Activated CD8-positive, alpha-beta T cell treated with anti-CD3 and anti-CD28 coated beads for 36 hours (primary cell): ENCODE measurements at regions of chr7 and their contacts with region 1.

Region 1: DNA sequence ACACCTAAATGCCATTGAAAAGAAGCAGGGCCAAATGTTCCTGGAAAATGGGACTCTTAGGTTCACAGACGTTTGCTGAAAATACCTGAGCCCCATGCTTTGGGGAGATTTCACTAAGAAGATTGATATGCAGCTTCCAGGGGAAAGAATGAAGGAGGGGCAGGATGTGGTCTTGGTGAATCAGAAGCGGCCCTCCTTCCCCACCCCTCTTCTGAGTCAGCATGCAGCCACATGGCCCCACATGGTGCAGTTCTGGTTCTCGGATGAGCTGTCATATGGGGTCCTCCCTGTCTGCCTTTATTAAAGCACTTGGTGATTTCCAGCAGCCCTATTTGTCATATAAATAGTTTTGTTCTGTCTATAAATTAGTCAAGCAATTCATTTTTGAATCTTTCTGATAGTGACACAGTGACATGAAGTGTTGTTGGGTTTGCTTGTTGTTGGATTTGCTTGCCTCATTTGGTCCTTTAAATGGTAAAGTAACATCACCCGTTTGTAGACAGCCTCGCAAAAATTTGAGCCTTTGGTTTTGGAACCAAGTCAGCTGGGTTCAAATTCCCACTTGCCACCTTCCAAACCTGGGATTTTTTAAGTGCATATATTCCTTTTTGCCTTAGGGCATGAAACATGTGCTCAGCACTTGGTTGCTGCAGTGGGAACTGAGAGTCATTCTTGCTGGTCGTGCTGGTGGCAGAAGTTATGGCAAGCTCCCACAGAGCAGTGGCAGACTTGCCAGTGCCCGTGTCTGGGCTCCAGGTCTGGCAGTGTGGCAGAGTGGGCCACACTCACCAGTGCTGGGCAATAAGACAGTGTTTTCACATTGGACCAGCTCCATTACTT is 68.1 kb upstream of the CDK6 start:
- DNase-seq: peak; percentile 96
- ATAC-seq: peak; percentile 98
- H3K4me3 Mint-ChIP-seq: peak overlapping the region; percentile 11
- H3K27ac Mint-ChIP-seq: peak overlapping the region; percentile 87
- H3K4me1 Mint-ChIP-seq: peaks cover 25% of the 10 kb centered on the region
- H3K27me3 Mint-ChIP-seq: peaks cover 1% of the 10 kb centered on the region
- CTCF ChIP-seq: no peak

Region 2: GRCh38 chr7:92200791-92201190 is 703.7 kb before region 1 on chr7:
- CTCF ChIA-PET with region 1: no interaction called
- POLR2A ChIA-PET with region 1: no interaction called
- intact Hi-C with region 1: no loop called
- DNase-seq: no peak
- ATAC-seq: no peak
- H3K4me3 Mint-ChIP-seq: no peak overlapping the region
- H3K27ac Mint-ChIP-seq: no peak overlapping the region
- H3K4me1 Mint-ChIP-seq: no peaks in the 10 kb centered on the region
- H3K27me3 Mint-ChIP-seq: no peaks in the 10 kb centered on the region
- CTCF ChIP-seq: no peak

Region 3: DNA sequence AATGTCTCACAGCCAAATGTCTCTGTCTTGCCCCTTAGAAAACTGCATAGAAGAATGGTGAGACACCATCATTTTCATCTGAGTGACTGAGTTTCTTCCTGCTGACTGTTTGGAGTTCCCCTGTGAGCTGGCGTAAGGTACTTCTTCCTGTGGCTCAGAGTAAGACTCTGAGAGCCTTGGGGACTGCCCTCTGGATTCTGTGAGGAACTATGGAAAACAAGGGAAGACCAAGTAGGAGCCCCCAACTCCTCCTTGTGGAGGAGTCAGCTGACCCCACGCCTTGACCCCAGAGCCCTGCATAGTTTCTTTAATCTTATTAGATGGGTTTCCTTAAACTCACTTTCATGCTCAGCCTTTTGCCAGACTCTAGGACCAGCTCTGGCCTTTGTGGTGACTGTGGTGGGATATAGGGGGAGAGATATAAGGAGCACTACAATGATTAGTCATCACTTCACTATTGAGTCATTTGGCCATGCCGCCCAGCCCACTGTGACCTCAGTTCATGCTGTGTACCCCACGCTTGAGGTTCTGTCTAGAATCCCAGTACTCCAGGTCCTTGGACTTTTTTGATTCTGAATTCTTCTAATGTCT is 262.5 kb before region 1 on chr7:
- CTCF ChIA-PET with region 1: no interaction called
- POLR2A ChIA-PET with region 1: no interaction called
- intact Hi-C with region 1: loop called (anchors 5 kb)
- DNase-seq: peak; percentile 87
- ATAC-seq: peak; percentile 71
- H3K4me3 Mint-ChIP-seq: peak overlapping the region; percentile 9
- H3K27ac Mint-ChIP-seq: peak overlapping the region; percentile 92
- H3K4me1 Mint-ChIP-seq: peaks cover 86% of the 10 kb centered on the region
- H3K27me3 Mint-ChIP-seq: no peaks in the 10 kb centered on the region
- CTCF ChIP-seq: no peak

Region 4: DNA sequence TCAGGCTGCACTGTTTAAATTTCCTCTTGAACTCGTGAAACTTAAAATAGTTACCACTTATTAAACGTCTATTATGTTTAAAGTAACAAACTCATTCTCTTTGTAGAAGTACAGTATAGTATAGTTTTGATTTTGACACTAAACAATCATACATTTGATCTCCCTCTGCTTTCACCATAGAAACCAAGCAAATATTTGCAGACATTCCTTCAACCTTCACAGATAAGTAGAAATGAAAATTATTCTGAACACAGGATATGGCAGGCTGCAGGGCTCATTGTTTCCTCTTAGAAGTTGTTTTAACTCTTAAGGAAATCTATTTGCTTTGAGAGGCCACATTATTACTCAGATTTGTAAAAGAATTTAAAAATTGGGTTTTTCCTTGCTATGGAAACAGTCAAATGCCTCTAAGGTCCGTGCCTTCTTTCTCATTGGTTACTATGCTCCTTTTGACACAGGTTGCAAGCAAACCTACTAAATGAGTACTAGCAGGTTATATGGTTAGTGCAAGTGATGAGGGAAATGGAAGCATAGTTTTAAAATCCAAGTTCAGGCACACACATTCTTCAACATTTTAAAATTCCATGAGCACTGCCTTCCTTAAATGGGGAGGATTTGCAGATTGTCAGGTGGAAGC is 221.5 kb before region 1 on chr7:
- CTCF ChIA-PET with region 1: no interaction called
- POLR2A ChIA-PET with region 1: interaction called, 3 read pairs
- intact Hi-C with region 1: loop called (anchors 10 kb)
- DNase-seq: peak; percentile 45
- ATAC-seq: peak; percentile 52
- H3K4me3 Mint-ChIP-seq: peak overlapping the region; percentile 29
- H3K27ac Mint-ChIP-seq: peak overlapping the region; percentile 95
- H3K4me1 Mint-ChIP-seq: peaks cover 78% of the 10 kb centered on the region
- H3K27me3 Mint-ChIP-seq: no peaks in the 10 kb centered on the region
- CTCF ChIP-seq: no peak

Region 5: DNA sequence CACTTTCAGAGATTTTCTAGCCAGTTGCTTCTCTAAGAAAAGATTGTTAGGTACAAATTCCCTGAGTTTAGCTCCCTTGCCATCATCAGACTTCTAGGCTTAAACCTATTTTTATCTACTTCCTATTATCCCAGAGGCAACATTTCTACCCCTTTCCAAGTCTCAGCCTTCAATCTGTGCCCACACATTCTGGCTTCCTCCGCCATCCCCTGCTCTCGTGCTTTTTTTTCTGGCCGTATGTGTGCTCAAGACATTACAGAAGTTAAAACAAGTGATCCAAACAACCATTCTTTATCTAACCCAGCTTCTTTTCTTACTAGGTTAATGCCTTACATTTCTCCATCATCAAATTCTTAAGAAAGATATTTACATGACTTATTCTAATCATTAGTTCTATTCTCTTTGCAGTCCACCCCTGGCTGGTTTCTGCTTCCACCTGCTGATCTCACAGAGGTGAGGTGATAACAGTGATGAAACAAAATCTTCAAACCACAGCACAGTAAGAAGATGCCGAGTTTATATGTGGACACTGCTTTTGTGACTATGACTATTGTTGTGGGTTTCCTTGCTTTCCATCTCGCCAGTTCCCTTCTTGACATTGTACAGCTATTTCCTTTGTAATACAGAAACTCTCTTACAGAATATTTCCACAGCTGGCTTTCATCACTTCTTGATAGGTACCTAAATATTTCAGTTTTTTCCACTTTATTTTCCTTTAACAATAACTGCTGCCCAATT is 49.8 kb before region 1 on chr7:
- CTCF ChIA-PET with region 1: no interaction called
- POLR2A ChIA-PET with region 1: no interaction called
- intact Hi-C with region 1: loop called (anchors 5 kb)
- DNase-seq: peak; percentile 54
- ATAC-seq: peak; percentile 92
- H3K4me3 Mint-ChIP-seq: no peak overlapping the region
- H3K27ac Mint-ChIP-seq: peak overlapping the region; percentile 81
- H3K4me1 Mint-ChIP-seq: peaks cover 21% of the 10 kb centered on the region
- H3K27me3 Mint-ChIP-seq: peaks cover 6% of the 10 kb centered on the region
- CTCF ChIP-seq: no peak

Region 6: DNA sequence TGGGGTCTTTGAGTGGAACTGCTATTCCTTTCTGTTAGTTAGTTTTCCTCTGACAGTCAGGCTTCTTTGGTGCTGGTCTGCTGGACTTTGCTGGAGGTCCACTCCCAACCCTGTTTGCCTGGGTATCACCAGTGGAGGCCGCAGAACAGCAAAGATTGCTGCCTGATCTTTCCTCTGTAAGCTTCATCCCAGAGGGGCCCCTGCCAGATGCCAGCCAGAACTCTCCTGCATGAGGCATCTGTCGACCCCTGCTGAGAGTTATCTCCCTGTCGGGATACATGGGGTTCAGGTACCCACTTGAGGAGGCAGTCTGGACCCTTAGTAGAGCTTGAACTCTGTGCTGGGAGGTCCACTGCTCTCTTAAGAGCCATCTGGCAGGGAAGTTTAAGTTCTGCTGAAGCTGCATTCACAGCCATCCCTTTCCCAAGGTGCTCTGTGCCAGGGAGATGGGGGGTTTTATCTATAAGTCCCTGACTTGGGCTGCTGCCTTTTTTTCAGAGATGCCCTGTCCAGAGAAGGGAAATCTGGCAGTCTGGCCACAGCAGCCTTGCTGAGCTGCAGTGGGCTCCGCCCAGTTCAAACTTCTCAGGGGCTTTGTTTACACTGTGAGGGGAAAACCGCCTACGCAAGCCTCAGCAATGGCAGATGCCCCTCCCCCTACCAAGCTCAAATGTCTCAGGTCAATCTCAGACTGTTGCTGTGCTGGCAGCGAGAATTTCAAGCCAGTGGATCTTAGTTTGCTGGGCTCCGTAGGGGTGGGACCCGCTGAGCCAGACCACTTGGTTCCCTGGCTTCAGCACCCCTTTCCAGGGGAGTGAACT is 21.6 kb after region 1 on chr7:
- CTCF ChIA-PET with region 1: no interaction called
- POLR2A ChIA-PET with region 1: no interaction called
- intact Hi-C with region 1: no loop called
- DNase-seq: peak; percentile 2
- ATAC-seq: no peak
- H3K4me3 Mint-ChIP-seq: no peak overlapping the region
- H3K27ac Mint-ChIP-seq: no peak overlapping the region
- H3K4me1 Mint-ChIP-seq: no peaks in the 10 kb centered on the region
- H3K27me3 Mint-ChIP-seq: peaks cover 2% of the 10 kb centered on the region
- CTCF ChIP-seq: no peak

Region 7: GRCh38 chr7:93036807-93037206 is 132.3 kb after region 1 on chr7:
- CTCF ChIA-PET with region 1: interaction called, 3 read pairs
- POLR2A ChIA-PET with region 1: interaction called, 4 read pairs
- intact Hi-C with region 1: loop called (anchors 5 kb)
- DNase-seq: peak; percentile 65
- ATAC-seq: peak; percentile 97
- H3K4me3 Mint-ChIP-seq: no peak overlapping the region
- H3K27ac Mint-ChIP-seq: peak overlapping the region; percentile 85
- H3K4me1 Mint-ChIP-seq: peaks cover 24% of the 10 kb centered on the region
- H3K27me3 Mint-ChIP-seq: no peaks in the 10 kb centered on the region
- CTCF ChIP-seq: no peak